ENCODE measurements at regions of chr2 and their contacts with region 1.

Region 1: GRCh38 chr2:120735746-120736170 is at the start of gene GLI2:
- DNase-seq: peak; percentile 67
- H3K4me3 Mint-ChIP-seq: peak within 1 kb of the TSS; percentile 49
- H3K27ac Mint-ChIP-seq: no peak within 1 kb of the TSS
- H3K4me1 Mint-ChIP-seq: peaks cover 9% of the 10 kb centered on the region
- H3K27me3 Mint-ChIP-seq: peaks cover 58% of the 10 kb centered on the region
- total RNA-seq, gene GLI2: not detected

Region 2: GRCh38 chr2:121071034-121071504 is 335.3 kb after region 1 on chr2:
- CTCF ChIA-PET with region 1: no interaction called
- intact Hi-C with region 1: loop called (anchors 2 kb)
- DNase-seq: peak; percentile 70
- H3K4me3 Mint-ChIP-seq: no peak overlapping the region
- H3K27ac Mint-ChIP-seq: no peak overlapping the region
- H3K4me1 Mint-ChIP-seq: no peaks in the 10 kb centered on the region
- H3K27me3 Mint-ChIP-seq: peaks cover 12% of the 10 kb centered on the region

Measured in activated naive CD4-positive, alpha-beta T cell treated with anti-CD3 and anti-CD28 coated beads for 36 hours (primary cell).